ENCODE measurements at regions of chr7 and their contacts with region 1.

Region 1: GRCh38 chr7:70060298-70061068 is 462.2 kb downstream of the AUTS2 start:
- DNase-seq: no peak
- ATAC-seq: no peak
- H3K4me3 ChIP-seq: no peak overlapping the region
- H3K27ac ChIP-seq: no peak overlapping the region
- H3K4me1 ChIP-seq: peaks cover 30% of the 10 kb centered on the region
- H3K27me3 ChIP-seq: no peaks in the 10 kb centered on the region
- CTCF ChIP-seq: no peak

Region 2: GRCh38 chr7:69992938-69993337 is 67.5 kb before region 1 on chr7:
- intact Hi-C with region 1: no loop called
- DNase-seq: no peak
- ATAC-seq: no peak
- H3K4me3 ChIP-seq: no peak overlapping the region
- H3K27ac ChIP-seq: no peak overlapping the region
- H3K4me1 ChIP-seq: no peaks in the 10 kb centered on the region
- H3K27me3 ChIP-seq: no peaks in the 10 kb centered on the region
- CTCF ChIP-seq: no peak

Region 3: GRCh38 chr7:70700055-70700940 is 639.8 kb after region 1 on chr7:
- intact Hi-C with region 1: loop called in 1 of 2 experiments (anchors 10 kb)
- DNase-seq: no peak
- ATAC-seq: no peak
- H3K4me3 ChIP-seq: no peak overlapping the region
- H3K27ac ChIP-seq: no peak overlapping the region
- H3K4me1 ChIP-seq: peaks cover 40% of the 10 kb centered on the region
- H3K27me3 ChIP-seq: no peaks in the 10 kb centered on the region
- CTCF ChIP-seq: no peak

Measured in psoas muscle (tissue), 8 donors.